HCT116 (cell line): ENCODE measurements at regions of chr11 and their contacts with region 1.

Region 1: DNA sequence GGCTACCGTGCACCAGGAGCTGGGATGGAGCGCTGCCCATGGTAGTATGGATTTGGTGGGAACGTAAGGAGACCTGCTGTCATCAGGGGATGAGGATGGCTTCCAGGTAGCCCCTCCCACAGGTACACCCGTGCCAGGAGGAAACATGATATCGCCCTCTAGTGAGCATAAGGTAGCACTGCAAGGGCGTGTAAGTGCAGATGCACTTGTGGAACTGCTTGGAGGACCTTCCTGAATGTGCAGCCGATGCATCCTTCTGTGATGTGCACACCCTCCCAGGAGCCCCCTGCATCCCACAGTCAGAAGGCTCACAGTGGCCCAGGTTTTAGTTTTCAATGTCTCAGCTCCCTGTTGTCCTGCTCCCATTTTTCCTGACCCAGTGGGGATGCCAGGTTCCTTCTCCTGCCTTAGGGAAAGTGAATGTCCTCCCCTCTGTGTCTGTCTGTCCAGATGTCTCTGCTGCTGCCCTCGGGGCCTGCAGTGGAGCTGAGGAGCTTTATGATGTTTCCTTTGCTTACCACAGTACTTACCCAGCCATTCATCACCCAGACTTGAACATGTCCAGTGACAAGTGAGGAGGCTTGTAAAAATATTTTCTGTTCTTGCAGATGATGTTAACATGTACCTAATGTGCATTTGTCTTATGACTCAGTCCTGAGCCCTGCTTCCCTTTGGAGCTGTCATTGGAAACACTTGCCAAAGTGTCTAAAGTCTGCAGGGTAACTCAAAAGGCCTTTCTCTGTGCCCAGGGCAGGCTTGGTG is 49.2 kb downstream of the DBX1 start:
- DNase-seq: peak; percentile 72
- ATAC-seq: peak; percentile 75
- H3K4me3 ChIP-seq: no peak overlapping the region
- H3K27ac ChIP-seq: no peak overlapping the region
- H3K4me1 ChIP-seq: peaks cover 14 to 27% of the 10 kb centered on the region in 2 experiments
- H3K27me3 ChIP-seq: no peaks in the 10 kb centered on the region
- CTCF ChIP-seq: peak; percentile 69 to 97 (median 87)
- POLR2A ChIP-seq: no peak
- RAD21 ChIP-seq: peak; percentile 81

Region 2: GRCh38 chr11:19846654-19847305 is 264.3 kb before region 1 on chr11:
- CTCF ChIA-PET with region 1: no interaction called
- POLR2A ChIA-PET with region 1: no interaction called
- RAD21 ChIA-PET with region 1: no interaction called
- intact Hi-C with region 1: no loop called
- DNase-seq: no peak
- ATAC-seq: no peak
- H3K4me3 ChIP-seq: no peak overlapping the region
- H3K27ac ChIP-seq: no peak overlapping the region
- H3K4me1 ChIP-seq: no peaks in the 10 kb centered on the region
- H3K27me3 ChIP-seq: no peaks in the 10 kb centered on the region
- CTCF ChIP-seq: no peak
- POLR2A ChIP-seq: no peak
- RAD21 ChIP-seq: no peak

Region 3: DNA sequence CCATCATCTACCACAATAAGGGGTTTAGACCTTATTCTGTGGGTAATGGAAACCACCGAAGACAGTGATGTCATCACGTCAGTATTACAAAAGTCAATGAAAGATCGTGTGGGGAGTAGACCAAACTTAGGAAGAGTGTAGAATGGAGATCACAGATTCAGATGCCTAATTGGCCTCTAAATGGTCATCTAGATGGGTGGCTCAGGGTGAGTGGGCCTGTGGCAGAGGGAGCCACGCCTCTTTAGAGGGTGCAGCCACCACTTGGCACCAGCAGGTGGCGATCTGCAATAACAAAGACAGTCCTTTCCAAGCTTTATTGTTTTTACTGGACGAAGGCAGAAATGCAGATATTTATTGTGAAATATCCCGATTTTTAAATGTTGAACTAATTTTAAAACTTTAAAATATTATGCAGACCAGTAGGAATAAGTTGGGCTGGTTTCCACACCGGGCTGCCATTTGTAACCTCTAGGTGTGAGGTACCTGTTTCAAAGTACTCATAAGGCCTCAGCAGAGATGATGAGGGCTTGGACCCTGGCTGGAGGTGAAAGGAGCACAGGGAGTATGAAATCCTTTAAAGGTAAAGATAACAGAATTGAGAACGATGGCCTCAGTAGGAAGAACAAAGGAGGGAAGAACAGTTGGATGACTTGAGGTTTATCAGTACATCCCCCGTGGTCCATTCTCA is 172.8 kb before region 1 on chr11:
- CTCF ChIA-PET with region 1: no interaction called
- POLR2A ChIA-PET with region 1: no interaction called
- RAD21 ChIA-PET with region 1: no interaction called
- intact Hi-C with region 1: loop called (anchors 5 kb)
- DNase-seq: peak; percentile 36
- ATAC-seq: peak; percentile 96
- H3K4me3 ChIP-seq: no peak overlapping the region
- H3K27ac ChIP-seq: no peak overlapping the region
- H3K4me1 ChIP-seq: no peaks in the 10 kb centered on the region
- H3K27me3 ChIP-seq: no peaks in the 10 kb centered on the region
- CTCF ChIP-seq: peak; percentile 52 to 93 (median 89); a peak in 5 of 6 replicates
- POLR2A ChIP-seq: no peak
- RAD21 ChIP-seq: peak; percentile 68